Keratinocyte (primary cell): ENCODE measurements at regions of chr3 and their contacts with region 1.

Region 1: DNA sequence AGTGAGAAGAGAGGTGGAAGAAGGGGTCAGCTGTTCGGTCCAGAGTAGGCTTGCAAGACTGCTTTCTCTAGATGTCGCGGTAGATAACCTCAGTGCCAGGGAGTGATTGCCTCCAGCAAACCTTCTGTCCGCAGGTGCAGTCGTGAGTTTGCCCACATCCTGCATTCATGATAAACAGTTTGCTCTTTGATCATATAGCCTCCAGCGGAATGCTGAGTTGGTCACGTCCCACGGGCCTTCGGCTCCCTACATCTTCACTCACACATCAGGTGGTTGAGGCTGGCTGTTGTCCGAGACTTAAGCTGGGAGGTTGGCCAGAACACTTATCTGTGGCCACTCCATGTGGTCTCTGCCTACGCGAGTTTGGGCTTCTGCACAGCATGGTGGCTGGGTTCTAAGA is 62.1 kb upstream of the NR2C2 start:
- DNase-seq: no peak
- H3K4me3 ChIP-seq: no peak overlapping the region
- H3K27ac ChIP-seq: no peak overlapping the region
- H3K4me1 ChIP-seq: no peaks in the 10 kb centered on the region
- H3K27me3 ChIP-seq: peaks cover 19% of the 10 kb centered on the region
- CTCF ChIP-seq: no peak

Region 2: DNA sequence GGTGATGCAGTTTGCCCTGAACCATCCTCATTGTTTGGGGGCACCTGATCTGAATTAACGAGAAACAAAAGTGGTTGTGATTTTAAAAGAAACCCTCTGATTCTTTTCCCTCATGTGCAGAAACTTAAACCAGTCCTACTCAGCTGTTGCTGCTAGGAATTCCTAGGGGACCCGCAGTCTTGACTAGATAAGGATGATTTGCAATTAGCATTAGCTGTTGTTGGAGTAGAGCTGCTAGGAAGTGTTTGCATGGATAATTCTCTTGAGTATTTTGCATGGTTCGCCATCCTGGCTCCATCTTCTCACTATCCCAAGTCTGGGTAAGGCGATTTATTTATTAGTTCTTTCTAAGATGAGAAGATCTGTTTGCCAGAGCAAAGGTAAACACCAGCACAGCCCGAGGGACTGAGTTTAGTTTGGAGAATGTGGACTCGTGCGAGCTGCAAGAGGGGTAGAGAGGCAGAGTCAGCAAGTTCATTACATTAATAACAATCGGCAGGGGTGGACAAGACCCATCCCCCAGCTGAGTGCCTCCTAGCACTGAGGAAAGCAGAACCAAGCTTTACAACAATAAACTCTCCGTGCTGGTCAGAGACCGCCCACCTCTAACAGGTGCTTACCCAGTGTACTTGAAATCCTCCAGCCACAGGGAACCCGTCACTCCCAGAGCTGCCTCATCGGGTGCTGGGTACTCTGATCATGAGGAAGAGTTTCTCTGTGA is 62.5 kb before region 1 on chr3:
- dilution Hi-C with region 1: loop called (anchors 10 kb)
- DNase-seq: no peak
- H3K4me3 ChIP-seq: no peak overlapping the region
- H3K27ac ChIP-seq: no peak overlapping the region
- H3K4me1 ChIP-seq: no peaks in the 10 kb centered on the region
- H3K27me3 ChIP-seq: peaks cover 19% of the 10 kb centered on the region
- CTCF ChIP-seq: no peak